ENCODE measurements at regions of chr17 and their contacts with region 1.

Region 1: DNA sequence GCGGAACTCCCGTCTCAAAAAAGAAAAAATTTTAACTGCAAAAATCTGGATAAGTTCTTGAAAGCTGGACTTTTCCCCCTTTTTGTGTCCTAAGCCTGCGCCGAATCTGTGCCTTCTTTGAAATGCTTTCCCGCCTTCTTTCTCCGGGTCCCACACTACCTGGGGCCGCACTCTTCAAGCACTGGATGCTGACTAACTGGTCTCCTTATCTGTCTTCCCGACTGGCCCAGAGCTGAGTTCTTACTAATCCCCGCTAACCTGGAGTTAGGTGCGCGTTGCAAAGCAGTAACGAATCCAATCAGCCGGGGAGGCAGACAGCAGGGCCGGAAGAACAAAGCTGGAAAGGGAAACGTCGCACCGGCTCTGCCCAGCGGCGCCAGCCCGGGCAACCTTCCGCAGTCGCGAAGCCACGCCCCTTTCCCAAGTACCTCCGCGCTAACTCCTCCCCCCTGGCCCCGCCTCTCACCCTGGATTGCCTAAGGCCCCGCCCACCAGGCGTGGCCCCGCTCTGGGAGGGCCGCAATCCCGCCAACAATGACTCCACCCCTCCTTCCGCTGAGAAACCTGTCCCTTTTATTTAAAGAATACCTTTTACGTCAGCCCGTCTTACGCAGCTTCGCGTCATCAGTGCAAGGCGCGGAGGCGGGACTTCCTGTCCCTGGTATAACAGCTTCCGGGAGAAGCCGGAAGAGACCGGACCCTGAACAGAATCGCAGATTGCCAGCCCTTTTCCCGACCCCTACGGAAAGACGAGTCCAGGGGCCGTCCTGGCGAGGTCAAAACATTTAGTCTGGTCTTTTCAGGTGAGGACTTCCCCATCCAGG is at the start of gene TMUB2:
- DNase-seq: peak; percentile 99
- ATAC-seq: peak; percentile 91
- H3K4me3 Mint-ChIP-seq: peak within 1 kb of the TSS; percentile 98
- H3K27ac Mint-ChIP-seq: peak within 1 kb of the TSS; percentile 98
- H3K4me1 Mint-ChIP-seq: peaks cover 42% of the 10 kb centered on the region
- H3K27me3 Mint-ChIP-seq: no peaks in the 10 kb centered on the region
- total RNA-seq, gene TMUB2: 31.4 to 34.1 TPM

Region 2: GRCh38 chr17:44149750-44150329 is 36.7 kb before region 1 on chr17:
- CTCF ChIA-PET with region 1: interaction called, 11 read pairs
- DNase-seq: no peak
- ATAC-seq: no peak
- H3K4me3 Mint-ChIP-seq: no peak overlapping the region
- H3K27ac Mint-ChIP-seq: no peak overlapping the region
- H3K4me1 Mint-ChIP-seq: peaks cover 24% of the 10 kb centered on the region
- H3K27me3 Mint-ChIP-seq: no peaks in the 10 kb centered on the region

Region 3: DNA sequence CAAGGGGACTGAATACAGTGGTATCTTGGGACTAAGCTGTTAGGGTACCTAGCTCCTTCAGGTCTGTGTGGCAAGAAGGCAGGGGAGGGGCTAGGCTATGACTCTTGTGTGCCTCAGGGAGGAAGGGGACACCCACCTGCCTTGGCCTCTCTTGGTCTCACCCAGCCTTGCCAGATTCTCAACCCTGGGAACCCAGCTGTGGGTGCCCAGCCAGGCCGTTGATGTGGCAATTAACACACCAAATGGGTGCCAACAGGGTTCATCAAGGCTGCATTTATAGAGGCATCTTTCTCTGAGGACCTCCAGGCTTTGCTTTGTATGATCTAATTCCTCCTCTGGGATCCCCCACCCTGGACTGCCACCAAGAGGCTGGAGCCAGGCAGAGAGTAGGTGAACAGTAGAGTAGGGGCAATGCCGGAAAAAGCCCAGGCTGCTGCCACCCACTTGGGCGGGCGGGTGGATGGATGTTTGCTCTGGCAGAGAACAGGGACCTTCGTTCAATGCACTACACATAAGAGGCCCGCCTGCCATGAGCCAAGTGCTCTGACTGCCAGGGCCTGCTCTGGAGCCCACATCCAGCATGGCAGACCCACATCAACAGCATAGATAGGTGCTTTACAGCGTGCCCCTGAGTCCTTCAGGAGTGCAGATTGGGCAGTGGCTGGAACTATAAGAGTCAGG is 19.2 kb before region 1 on chr17:
- CTCF ChIA-PET with region 1: interaction called, 13 read pairs
- DNase-seq: no peak
- ATAC-seq: no peak
- H3K4me3 Mint-ChIP-seq: no peak overlapping the region
- H3K27ac Mint-ChIP-seq: no peak overlapping the region
- H3K4me1 Mint-ChIP-seq: no peaks in the 10 kb centered on the region
- H3K27me3 Mint-ChIP-seq: no peaks in the 10 kb centered on the region